Activated T-helper 2 cell treated with anti-CD3 and anti-CD28 coated beads, Interferon-gamma antibody, Interleukin-2, Interleukin-4, amounts not matched to agents 10 μg/mL and 5 μg/mL and 100 μg/mL, durations not matched to agents 14 hours and 24 hours and 36 hours (primary cell): ENCODE measurements at regions of chr17 and their contacts with region 1.

Region 1: GRCh38 chr17:76014184-76014924 is 12.8 kb downstream of the EVPL start:
- DNase-seq: peak; percentile 68
- H3K4me3 Mint-ChIP-seq: no peak overlapping the region
- H3K27ac Mint-ChIP-seq: no peak overlapping the region
- H3K4me1 Mint-ChIP-seq: no peaks in the 10 kb centered on the region
- H3K27me3 Mint-ChIP-seq: no peaks in the 10 kb centered on the region

Region 2: DNA sequence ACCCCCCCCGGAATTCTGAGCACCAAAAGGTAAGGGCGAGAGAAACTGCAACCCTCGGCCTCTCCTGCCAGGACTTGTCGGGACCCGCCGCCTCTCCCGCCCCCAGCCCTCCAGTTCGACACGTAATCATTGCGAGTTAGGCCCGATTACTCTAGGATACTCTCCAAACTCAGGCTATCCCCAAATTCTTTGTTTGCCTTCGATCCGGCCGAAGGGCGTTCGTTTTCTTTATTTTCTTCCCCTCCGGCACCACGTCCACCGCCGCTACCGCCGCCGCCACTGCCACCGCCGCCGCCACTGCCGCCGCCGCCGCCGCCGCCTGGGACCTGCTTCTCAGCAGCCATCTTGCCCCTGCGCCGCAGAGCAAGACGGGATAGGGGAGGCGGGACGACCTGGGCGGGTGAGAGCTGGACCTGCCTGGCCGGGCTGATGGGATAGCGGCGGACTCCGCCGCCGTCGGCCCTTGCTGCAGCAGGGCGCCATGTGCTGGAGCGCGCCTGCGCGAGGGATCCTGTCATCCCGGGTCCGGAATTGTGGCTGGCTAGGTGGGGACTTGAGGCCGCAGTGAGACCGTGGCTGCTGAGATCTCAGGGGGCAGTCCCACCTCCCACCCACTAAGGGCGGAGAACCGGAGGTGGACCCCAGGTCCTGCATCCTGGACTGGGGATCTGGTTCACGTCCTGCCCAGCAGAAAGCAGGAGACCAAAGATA is 57.9 kb after region 1 on chr17 and contains the start of gene SRP68:
- intact Hi-C with region 1: no loop called
- DNase-seq: peak; percentile 82
- H3K4me3 Mint-ChIP-seq: peak within 1 kb of the TSS; percentile 99
- H3K27ac Mint-ChIP-seq: peak within 1 kb of the TSS; percentile 100
- H3K4me1 Mint-ChIP-seq: peaks cover 26% of the 10 kb centered on the region
- H3K27me3 Mint-ChIP-seq: peaks cover 34% of the 10 kb centered on the region
- total RNA-seq, gene SRP68: 188 and 194 TPM in 2 replicates

Region 3: GRCh38 chr17:76103274-76104139 is 89.2 kb after region 1 on chr17 and contains the start of gene EXOC7:
- intact Hi-C with region 1: loop called (anchors 1 kb)
- DNase-seq: peak; percentile 91
- H3K4me3 Mint-ChIP-seq: peak within 1 kb of the TSS; percentile 96
- H3K27ac Mint-ChIP-seq: peak within 1 kb of the TSS; percentile 93
- H3K4me1 Mint-ChIP-seq: peaks cover 10% of the 10 kb centered on the region
- H3K27me3 Mint-ChIP-seq: no peaks in the 10 kb centered on the region
- total RNA-seq, gene EXOC7: 103 and 110 TPM in 2 replicates

Region 4: GRCh38 chr17:76296186-76296585 is 281.8 kb after region 1 on chr17:
- intact Hi-C with region 1: loop called (anchors 1 kb)
- DNase-seq: no peak
- H3K4me3 Mint-ChIP-seq: no peak overlapping the region
- H3K27ac Mint-ChIP-seq: no peak overlapping the region
- H3K4me1 Mint-ChIP-seq: peaks cover 3% of the 10 kb centered on the region
- H3K27me3 Mint-ChIP-seq: no peaks in the 10 kb centered on the region